ENCODE measurements at regions of chr3 and their contacts with region 1.

Region 1: DNA sequence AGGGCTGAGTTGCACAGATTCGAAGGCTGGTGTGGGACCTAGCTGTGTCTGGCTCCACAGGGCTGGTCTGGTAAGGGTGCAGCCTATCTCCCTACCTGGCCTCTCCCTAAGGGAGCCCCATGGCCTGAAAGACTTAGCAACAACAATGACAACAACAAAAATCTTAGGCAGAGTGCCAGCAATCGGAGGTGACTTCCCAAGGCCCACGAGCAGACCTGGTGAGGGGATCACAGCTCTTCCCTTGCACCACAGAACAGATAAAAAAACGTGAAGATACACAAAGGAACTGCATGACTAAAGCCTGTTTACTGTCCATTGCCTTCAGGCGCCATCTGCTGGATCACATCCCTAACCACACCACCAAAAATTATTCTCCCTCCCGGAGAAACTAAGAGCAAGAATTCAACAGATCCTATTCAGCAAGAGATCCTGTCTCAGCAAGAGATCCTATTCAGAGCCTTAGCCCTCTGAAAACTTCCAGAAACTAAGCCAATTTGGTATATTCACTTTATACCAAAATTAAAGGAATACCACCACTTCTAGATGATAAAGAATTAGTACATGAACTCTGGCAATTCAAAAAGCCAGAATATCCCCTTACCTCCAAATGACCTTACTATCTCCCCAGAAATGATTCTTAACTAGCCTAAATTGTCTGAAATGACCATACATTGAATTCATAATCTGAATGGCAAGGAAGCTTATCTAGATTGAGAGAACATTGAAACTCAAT is 24.1 kb upstream of the OR5K4 start:
- DNase-seq: peak; percentile 6 to 70 (median 27)
- ATAC-seq: peak; percentile 78
- H3K4me3 ChIP-seq: no peak overlapping the region
- H3K4me3 Mint-ChIP-seq: no peak overlapping the region
- H3K27ac ChIP-seq: no peak overlapping the region
- H3K27ac Mint-ChIP-seq: no peak overlapping the region
- H3K4me1 ChIP-seq: peaks cover 3% of the 10 kb centered on the region
- H3K4me1 Mint-ChIP-seq: no peaks in the 10 kb centered on the region
- H3K27me3 ChIP-seq: peaks cover 0 to 4% of the 10 kb centered on the region in 2 experiments
- H3K27me3 Mint-ChIP-seq: peaks cover 45% of the 10 kb centered on the region
- CTCF ChIP-seq: peak; percentile 63

Region 2: DNA sequence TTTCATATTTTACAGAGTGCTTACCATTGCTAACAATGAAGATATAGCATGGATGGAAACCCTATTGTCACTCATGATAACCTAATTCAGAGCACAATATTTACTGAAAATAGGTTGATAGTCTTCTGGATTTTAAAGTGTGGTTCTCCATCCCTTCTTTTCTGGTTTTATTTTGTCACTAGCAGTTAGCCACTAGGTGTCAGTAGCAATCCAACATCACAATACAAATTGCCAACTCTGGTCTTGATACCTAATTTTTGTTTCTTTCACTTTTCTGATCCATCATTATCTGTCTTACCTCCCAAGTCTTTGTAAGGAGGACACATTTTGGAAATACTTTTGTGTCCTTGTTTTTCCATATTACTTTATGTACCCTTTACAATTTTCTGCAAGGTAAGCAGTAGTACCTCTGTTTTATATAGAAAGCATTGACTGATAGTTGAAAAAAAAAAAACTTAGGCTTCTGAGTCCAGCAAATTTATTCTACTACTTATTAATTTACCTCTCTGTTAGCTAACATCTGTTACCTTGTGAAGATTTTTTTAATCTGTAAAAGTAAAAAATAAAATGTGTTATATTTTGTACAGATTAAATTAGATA is 536.0 kb before region 1 on chr3:
- CTCF ChIA-PET with region 1: no interaction called
- POLR2A ChIA-PET with region 1: no interaction called
- intact Hi-C with region 1: loop called in 1 of 2 experiments (anchors 10 kb)
- DNase-seq: peak in 4 of 14 experiments; percentile 24 to 80 (median 75)
- ATAC-seq: peak; percentile 58
- H3K4me3 ChIP-seq: no peak overlapping the region
- H3K4me3 Mint-ChIP-seq: no peak overlapping the region
- H3K27ac ChIP-seq: no peak overlapping the region
- H3K27ac Mint-ChIP-seq: no peak overlapping the region
- H3K4me1 ChIP-seq: no peaks in the 10 kb centered on the region
- H3K4me1 Mint-ChIP-seq: no peaks in the 10 kb centered on the region
- H3K27me3 ChIP-seq: no peaks in the 10 kb centered on the region
- H3K27me3 Mint-ChIP-seq: no peaks in the 10 kb centered on the region
- CTCF ChIP-seq: peak; percentile 89

Region 3: GRCh38 chr3:98039322-98040024 is 290.1 kb before region 1 on chr3:
- CTCF ChIA-PET with region 1: interaction called, 3 read pairs
- POLR2A ChIA-PET with region 1: no interaction called
- intact Hi-C with region 1: loop called (anchors 1 kb)
- DNase-seq: peak; percentile 40 to 91 (median 62)
- ATAC-seq: peak; percentile 93
- H3K4me3 ChIP-seq: peak overlapping the region; percentile 45
- H3K4me3 Mint-ChIP-seq: peak overlapping the region; percentile 72
- H3K27ac ChIP-seq: peak overlapping the region; percentile 59 to 70
- H3K27ac Mint-ChIP-seq: peak overlapping the region; percentile 90
- H3K4me1 ChIP-seq: no peaks in the 10 kb centered on the region
- H3K4me1 Mint-ChIP-seq: no peaks in the 10 kb centered on the region
- H3K27me3 ChIP-seq: no peaks in the 10 kb centered on the region
- H3K27me3 Mint-ChIP-seq: peaks cover 15% of the 10 kb centered on the region
- CTCF ChIP-seq: peak; percentile 98

Region 4: DNA sequence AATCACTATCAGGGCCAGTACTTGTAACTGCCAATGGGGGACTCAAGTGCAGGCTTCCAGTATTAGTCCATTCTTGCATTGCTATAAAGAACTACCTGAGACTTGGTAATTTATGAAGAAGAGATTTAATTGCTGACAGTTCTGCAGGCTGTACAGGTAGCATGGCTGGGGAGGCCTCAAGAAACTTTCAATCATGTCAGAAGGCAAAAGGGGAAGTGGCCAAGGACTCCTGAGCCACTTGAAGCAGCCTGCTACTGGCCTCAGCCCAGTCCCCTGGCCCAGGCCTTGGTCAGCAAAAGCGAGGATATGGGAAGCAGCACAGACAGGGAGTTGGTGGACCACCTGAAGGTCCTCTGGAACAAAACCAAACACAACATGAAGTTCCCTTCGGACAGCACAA is 104.2 kb after region 1 on chr3:
- CTCF ChIA-PET with region 1: no interaction called
- POLR2A ChIA-PET with region 1: no interaction called
- intact Hi-C with region 1: no loop called
- DNase-seq: no peak
- ATAC-seq: no peak
- H3K4me3 ChIP-seq: no peak overlapping the region
- H3K4me3 Mint-ChIP-seq: no peak overlapping the region
- H3K27ac ChIP-seq: no peak overlapping the region
- H3K27ac Mint-ChIP-seq: no peak overlapping the region
- H3K4me1 ChIP-seq: no peaks in the 10 kb centered on the region
- H3K4me1 Mint-ChIP-seq: no peaks in the 10 kb centered on the region
- H3K27me3 ChIP-seq: no peaks in the 10 kb centered on the region
- H3K27me3 Mint-ChIP-seq: no peaks in the 10 kb centered on the region
- CTCF ChIP-seq: no peak

Region 5: GRCh38 chr3:98573181-98573728 is 243.7 kb after region 1 on chr3:
- CTCF ChIA-PET with region 1: no interaction called
- POLR2A ChIA-PET with region 1: no interaction called
- intact Hi-C with region 1: loop called (anchors 5 kb)
- DNase-seq: peak in 3 of 14 experiments; percentile 59 to 65 (median 63)
- ATAC-seq: peak; percentile 56
- H3K4me3 ChIP-seq: no peak overlapping the region
- H3K4me3 Mint-ChIP-seq: no peak overlapping the region
- H3K27ac ChIP-seq: no peak overlapping the region
- H3K27ac Mint-ChIP-seq: peak overlapping the region; percentile 3
- H3K4me1 ChIP-seq: no peaks in the 10 kb centered on the region
- H3K4me1 Mint-ChIP-seq: peaks cover 17% of the 10 kb centered on the region
- H3K27me3 ChIP-seq: no peaks in the 10 kb centered on the region
- H3K27me3 Mint-ChIP-seq: no peaks in the 10 kb centered on the region
- CTCF ChIP-seq: peak; percentile 74

Region 6: DNA sequence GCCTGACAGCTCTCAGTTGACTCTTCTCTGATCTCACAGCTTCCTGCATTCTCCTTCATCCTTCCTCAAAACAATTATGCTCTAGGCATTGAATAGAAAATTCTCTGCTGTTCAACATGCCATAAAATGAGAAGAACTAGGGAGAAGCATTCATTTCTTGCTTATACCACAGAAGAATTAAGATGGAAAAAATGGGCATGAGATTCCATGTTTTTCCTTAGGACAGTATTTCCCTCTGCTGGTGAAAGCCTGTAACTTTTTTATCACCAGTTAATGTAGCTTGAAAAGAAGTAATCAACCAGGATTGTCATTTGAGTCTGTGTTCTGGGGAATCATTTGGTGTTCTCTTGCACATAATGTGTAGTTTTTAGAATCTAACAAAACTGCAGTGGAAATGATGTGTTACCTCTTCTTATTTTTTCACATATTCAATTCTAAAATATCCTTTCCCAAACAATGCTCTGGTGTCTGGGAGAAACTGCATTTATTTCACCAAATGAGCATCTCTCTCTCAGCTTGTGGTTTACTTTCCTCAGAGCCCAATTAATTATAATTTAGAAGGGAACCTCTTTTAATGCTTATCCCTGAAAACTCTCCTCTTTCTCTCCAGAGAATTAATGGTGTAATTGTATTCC is 664.7 kb after region 1 on chr3:
- CTCF ChIA-PET with region 1: no interaction called
- POLR2A ChIA-PET with region 1: no interaction called
- intact Hi-C with region 1: no loop called
- DNase-seq: no peak
- ATAC-seq: no peak
- H3K4me3 ChIP-seq: no peak overlapping the region
- H3K4me3 Mint-ChIP-seq: no peak overlapping the region
- H3K27ac ChIP-seq: no peak overlapping the region
- H3K27ac Mint-ChIP-seq: no peak overlapping the region
- H3K4me1 ChIP-seq: no peaks in the 10 kb centered on the region
- H3K4me1 Mint-ChIP-seq: no peaks in the 10 kb centered on the region
- H3K27me3 ChIP-seq: no peaks in the 10 kb centered on the region
- H3K27me3 Mint-ChIP-seq: no peaks in the 10 kb centered on the region
- CTCF ChIP-seq: peak; percentile 16